ENCODE measurements at regions of chr11 and their contacts with region 1.

Region 1: GRCh38 chr11:66835768-66836405 is 7.4 kb upstream of the RCE1 start:
- DNase-seq: no peak
- H3K4me3 Mint-ChIP-seq: no peak overlapping the region
- H3K27ac Mint-ChIP-seq: peak overlapping the region; percentile 1
- H3K4me1 Mint-ChIP-seq: peaks cover 19% of the 10 kb centered on the region
- H3K27me3 Mint-ChIP-seq: no peaks in the 10 kb centered on the region

Region 2: GRCh38 chr11:66579017-66579606 is 256.8 kb before region 1 on chr11:
- CTCF ChIA-PET with region 1: no interaction called
- intact Hi-C with region 1: loop called (anchors 2 kb)
- DNase-seq: peak; percentile 89
- H3K4me3 Mint-ChIP-seq: no peak overlapping the region
- H3K27ac Mint-ChIP-seq: no peak overlapping the region
- H3K4me1 Mint-ChIP-seq: peaks cover 14% of the 10 kb centered on the region
- H3K27me3 Mint-ChIP-seq: no peaks in the 10 kb centered on the region

Region 3: DNA sequence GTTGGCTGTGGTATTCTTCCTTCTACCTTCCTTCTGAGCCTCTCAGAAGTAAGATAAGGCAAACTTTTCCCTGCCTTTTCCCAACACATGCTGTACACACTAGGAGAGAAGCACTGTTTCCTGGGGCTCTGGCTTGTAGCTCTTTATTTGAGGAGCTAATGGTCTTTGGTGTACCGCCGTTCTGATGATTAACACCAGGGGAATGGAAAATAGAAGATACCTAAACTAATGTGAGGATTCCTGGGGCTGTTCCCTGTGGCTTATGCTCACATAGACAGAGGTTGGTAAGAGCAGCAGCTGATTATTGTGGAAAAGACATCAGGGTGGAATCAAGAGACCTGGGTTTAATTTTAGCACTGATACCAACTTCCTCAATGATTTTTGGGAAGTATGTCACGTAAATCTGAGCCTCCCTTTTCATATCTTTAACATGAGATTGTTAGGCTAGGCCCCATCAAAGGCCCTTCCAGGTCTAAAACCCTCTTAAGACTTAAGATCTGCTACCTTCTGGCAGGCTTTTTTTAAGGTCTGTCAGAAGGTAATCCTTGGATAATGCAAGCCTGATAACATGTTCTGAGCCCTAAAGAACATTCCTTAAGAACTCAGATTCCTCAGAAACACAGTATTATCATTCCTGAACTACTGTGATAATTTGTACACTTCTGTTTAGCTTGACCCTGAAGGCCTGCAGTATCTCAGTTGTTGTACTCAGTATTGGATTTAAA is 17.5 kb before region 1 on chr11:
- CTCF ChIA-PET with region 1: interaction called, 12 read pairs
- intact Hi-C with region 1: no loop called
- DNase-seq: no peak
- H3K4me3 Mint-ChIP-seq: no peak overlapping the region
- H3K27ac Mint-ChIP-seq: no peak overlapping the region
- H3K4me1 Mint-ChIP-seq: no peaks in the 10 kb centered on the region
- H3K27me3 Mint-ChIP-seq: no peaks in the 10 kb centered on the region